PC-9 (cell line): ENCODE measurements at regions of chr2 and their contacts with region 1.

Region 1: DNA sequence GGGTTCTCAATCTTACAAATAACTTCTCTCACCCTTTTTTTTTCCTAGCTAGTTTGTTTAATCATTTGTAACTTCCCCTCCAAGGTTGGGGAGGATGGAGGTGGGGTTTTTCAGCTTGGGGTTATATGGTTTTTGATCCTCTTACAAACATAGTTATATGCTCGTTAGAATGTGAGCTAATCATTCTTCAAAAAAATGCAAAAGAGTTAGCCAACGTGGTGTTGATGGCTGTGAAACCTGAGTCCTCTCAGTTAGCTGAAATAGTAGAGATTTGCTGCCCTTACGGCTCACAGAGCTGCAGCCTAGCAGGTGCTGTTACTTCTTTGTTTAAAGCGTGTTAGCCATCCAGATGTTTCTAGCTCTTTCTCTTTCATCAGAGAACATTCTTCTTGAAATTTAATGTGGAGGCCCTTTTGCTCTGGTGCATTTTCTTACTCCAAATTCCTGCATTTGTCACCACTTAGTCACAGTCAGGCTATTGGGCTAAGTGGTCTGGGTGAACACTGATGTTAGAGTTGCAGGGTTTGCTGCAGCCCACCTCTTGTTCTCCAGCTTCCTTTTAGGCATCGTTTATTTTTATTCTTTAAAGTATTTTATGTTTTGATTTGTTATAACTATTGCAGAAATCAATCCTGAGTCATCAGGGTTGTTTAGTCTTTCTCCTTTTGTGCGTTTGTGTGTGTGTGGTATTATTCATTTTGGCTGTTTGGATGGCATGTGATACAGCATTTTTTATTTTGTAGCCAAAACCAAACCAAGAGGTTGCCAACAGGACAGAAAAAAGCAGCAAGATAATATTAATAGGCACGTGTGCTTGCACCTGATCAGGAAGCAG is 41.1 kb downstream of the LIMS1 start:
- DNase-seq: no peak
- H3K4me3 ChIP-seq: no peak overlapping the region
- H3K27ac ChIP-seq: no peak overlapping the region
- H3K4me1 ChIP-seq: peaks cover 6% of the 10 kb centered on the region; the same call in 1 of the 2 replicates
- H3K27me3 ChIP-seq: no peaks in the 10 kb centered on the region
- CTCF ChIP-seq: no peak

Region 2: DNA sequence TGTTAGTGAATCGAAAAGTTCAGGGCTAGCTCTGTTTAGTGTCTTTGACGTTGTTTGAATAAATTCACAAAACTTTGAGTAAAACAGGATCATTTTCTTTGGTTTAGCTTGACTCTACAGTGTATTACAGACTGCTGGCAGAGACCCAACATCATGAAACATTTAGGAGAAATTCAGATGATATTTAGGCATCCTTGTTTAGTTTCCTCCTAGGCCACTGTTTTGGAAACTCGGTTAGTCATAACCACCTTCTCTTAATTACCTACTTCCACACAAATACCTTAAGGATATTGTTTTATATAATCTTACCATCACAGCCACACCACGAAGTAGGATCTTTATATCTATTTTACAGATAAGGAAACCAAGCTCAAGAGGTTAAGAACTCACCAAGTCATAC is 33.3 kb before region 1 on chr2:
- CTCF ChIA-PET with region 1: no interaction called
- POLR2A ChIA-PET with region 1: no interaction called
- intact Hi-C with region 1: loop called (anchors 5 kb)
- DNase-seq: no peak
- H3K4me3 ChIP-seq: no peak overlapping the region
- H3K27ac ChIP-seq: no peak overlapping the region
- H3K4me1 ChIP-seq: no peaks in the 10 kb centered on the region
- H3K27me3 ChIP-seq: no peaks in the 10 kb centered on the region
- CTCF ChIP-seq: no peak